ENCODE measurements at regions of chr16 and their contacts with region 1.

Region 1: GRCh38 chr16:89193021-89193575 is 7.2 kb downstream of the SLC22A31 start:
- DNase-seq: no peak
- ATAC-seq: peak; percentile 78
- H3K4me3 Mint-ChIP-seq: no peak overlapping the region
- H3K27ac Mint-ChIP-seq: no peak overlapping the region
- H3K4me1 Mint-ChIP-seq: no peaks in the 10 kb centered on the region
- H3K27me3 Mint-ChIP-seq: no peaks in the 10 kb centered on the region

Region 2: GRCh38 chr16:89586853-89587252 is 393.8 kb after region 1 on chr16:
- CTCF ChIA-PET with region 1: no interaction called
- POLR2A ChIA-PET with region 1: no interaction called
- intact Hi-C with region 1: loop called in 1 of 2 experiments (anchors 2 kb)
- DNase-seq: peak; percentile 60
- ATAC-seq: peak; percentile 31
- H3K4me3 Mint-ChIP-seq: no peak overlapping the region
- H3K27ac Mint-ChIP-seq: no peak overlapping the region
- H3K4me1 Mint-ChIP-seq: no peaks in the 10 kb centered on the region
- H3K27me3 Mint-ChIP-seq: no peaks in the 10 kb centered on the region

Measured in activated CD4-positive, alpha-beta T cell treated with anti-CD3 and anti-CD28 coated beads for 36 hours (primary cell).